Activated naive CD4-positive, alpha-beta T cell treated with anti-CD3 and anti-CD28 coated beads for 36 hours (primary cell): ENCODE measurements at regions of chr12 and their contacts with region 1.

Region 1: DNA sequence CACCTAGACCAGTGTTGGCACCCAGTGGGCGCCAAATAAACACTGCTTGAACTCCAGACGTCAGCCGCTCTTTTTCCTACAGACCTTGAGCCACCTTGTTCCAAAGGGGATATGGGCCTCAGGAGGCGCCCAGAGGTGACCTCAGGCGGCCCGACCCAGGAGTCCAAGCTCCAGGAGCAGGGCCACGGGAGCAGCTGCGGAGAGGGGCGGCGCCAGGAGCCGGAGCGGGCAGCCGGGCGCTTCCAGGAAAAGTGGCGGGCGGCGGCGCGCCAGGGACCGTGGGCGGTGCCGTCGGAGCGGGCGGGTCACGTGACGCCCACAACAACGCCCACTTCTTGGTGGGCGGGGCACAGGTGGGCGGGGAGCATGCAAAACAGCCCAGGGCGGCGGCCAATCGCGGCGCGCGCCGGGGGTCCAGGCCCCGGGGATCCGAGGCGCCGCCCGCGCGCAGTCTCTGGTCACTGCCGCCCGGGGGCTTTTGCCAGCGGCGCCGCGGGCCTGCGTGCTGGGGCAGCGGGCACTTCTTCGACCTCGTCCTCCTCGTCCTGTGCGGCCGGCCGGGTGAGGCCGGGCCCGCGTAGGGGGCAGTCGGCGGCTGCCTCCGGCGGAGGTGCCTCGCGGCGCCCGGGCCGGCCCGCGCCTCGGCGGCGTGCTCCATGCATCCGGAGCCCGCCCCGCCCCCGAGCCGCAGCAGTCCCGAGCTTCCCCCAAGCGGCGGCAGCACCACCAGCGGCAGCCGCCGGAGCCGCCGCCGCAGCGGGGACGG is at the start of gene ORAI1:
- DNase-seq: peak; percentile 97
- H3K4me3 Mint-ChIP-seq: peak within 1 kb of the TSS; percentile 83
- H3K27ac Mint-ChIP-seq: peak within 1 kb of the TSS; percentile 98
- H3K4me1 Mint-ChIP-seq: peaks cover 37% of the 10 kb centered on the region
- H3K27me3 Mint-ChIP-seq: no peaks in the 10 kb centered on the region
- total RNA-seq, gene ORAI1: 21.1 to 21.8 TPM

Region 2: DNA sequence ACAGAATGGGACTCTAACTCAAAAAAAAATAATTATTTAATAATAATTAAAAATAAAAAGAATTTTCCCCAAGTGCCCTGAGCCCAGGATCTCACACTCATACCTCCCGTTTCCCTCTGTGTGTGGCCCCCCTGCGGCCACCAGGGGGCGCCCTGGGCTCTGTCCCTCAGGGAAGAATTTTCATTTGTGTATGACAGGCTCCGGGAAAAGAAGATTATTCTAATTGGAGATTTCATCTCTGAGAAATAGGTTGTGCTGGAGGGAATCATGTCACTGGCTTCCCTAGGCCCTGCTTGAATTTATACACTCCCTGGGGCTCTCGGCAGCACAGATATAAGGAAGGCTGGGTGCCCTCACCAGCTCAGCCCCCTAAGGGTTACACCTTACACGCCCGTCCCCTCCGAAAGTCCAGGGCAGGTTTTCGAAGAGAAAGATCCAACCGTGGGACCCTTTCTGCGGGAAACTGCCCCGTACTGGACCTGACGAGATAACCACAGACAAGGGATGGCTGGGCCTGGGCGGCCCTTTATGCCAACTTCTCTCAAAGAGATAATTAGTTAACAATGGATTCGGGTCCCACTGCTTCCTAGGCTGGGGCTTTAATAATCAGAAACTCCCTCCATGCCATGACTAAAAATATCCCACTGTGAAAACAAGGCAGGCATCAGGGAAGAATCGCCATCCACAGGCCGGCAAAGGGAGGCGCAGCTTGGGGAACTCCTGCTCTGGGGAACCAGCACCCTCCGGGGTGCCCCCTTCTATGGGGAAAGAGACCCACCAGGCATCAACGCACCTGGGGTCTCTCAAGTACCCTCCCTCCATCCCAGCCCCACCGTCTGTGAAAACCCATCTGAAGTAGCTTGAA is 126.1 kb before region 1 on chr12:
- CTCF ChIA-PET with region 1: interaction called, 12 read pairs
- intact Hi-C with region 1: loop called (anchors 1 kb)
- DNase-seq: peak; percentile 83
- H3K4me3 Mint-ChIP-seq: no peak overlapping the region
- H3K27ac Mint-ChIP-seq: no peak overlapping the region
- H3K4me1 Mint-ChIP-seq: peaks cover 9% of the 10 kb centered on the region
- H3K27me3 Mint-ChIP-seq: no peaks in the 10 kb centered on the region

Region 3: GRCh38 chr12:121579981-121580868 is 46.0 kb before region 1 on chr12:
- CTCF ChIA-PET with region 1: interaction called, 8 read pairs
- intact Hi-C with region 1: loop called (anchors 1 kb)
- DNase-seq: peak; percentile 85
- H3K4me3 Mint-ChIP-seq: peak overlapping the region; percentile 90
- H3K27ac Mint-ChIP-seq: peak overlapping the region; percentile 92
- H3K4me1 Mint-ChIP-seq: peaks cover 16% of the 10 kb centered on the region
- H3K27me3 Mint-ChIP-seq: no peaks in the 10 kb centered on the region

Region 4: GRCh38 chr12:121657305-121658008 is 31.2 kb after region 1 on chr12:
- CTCF ChIA-PET with region 1: interaction called, 8 read pairs
- intact Hi-C with region 1: loop called (anchors 1 kb)
- DNase-seq: peak; percentile 36
- H3K4me3 Mint-ChIP-seq: no peak overlapping the region
- H3K27ac Mint-ChIP-seq: peak overlapping the region; percentile 5
- H3K4me1 Mint-ChIP-seq: peaks cover 53% of the 10 kb centered on the region
- H3K27me3 Mint-ChIP-seq: no peaks in the 10 kb centered on the region

Region 5: GRCh38 chr12:121688966-121689365 is 62.7 kb after region 1 on chr12:
- CTCF ChIA-PET with region 1: interaction called, 4 read pairs
- intact Hi-C with region 1: loop called (anchors 1 kb)
- DNase-seq: no peak
- H3K4me3 Mint-ChIP-seq: no peak overlapping the region
- H3K27ac Mint-ChIP-seq: no peak overlapping the region
- H3K4me1 Mint-ChIP-seq: peaks cover 6% of the 10 kb centered on the region
- H3K27me3 Mint-ChIP-seq: no peaks in the 10 kb centered on the region